HepG2 (cell line): ENCODE measurements at regions of chr4 and their contacts with region 1.

Region 1: DNA sequence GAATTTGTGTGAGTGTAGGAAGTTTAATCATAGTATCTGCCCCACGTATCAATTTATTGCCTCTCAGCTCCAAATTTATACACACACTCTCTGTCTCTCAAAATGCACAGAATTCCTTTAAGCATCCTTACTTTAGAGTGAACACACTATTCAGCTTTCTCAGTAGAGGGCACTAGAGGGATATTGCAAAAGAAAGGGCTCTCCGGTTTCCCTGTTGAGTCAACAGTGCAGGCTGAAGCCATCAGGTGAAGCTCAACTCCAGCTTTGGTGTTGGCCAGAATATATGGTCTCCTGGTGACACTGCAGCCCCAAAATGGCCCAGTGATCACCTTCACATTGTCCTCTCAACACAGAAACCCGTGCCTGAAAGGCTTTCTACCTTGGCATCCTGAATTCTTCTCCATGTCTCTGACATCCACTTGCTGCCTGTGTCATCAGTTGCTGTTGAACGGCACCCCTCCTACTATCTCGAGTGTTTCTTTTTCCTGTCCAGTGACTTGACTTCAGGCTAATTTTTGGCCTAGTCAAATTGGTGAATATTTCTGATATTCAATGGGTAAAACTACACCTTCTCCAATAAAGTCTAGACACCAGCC is 670.5 kb downstream of the GABRG1 start:
- DNase-seq: peak; percentile 18
- ATAC-seq: peak; percentile 96
- H3K4me3 ChIP-seq: no peak overlapping the region
- H3K27ac ChIP-seq: no peak overlapping the region
- H3K4me1 ChIP-seq: no peaks in the 10 kb centered on the region
- H3K27me3 ChIP-seq: no peaks in the 10 kb centered on the region; a peak in 1 of 5 replicates
- CTCF ChIP-seq: peak; percentile 61
- EP300 ChIP-seq: no peak
- POLR2A ChIP-seq: no peak
- RAD21 ChIP-seq: no peak

Region 2: GRCh38 chr4:45741897-45742296 is 288.5 kb after region 1 on chr4:
- CTCF ChIA-PET with region 1: no interaction called
- POLR2A ChIA-PET with region 1: no interaction called
- in situ Hi-C with region 1: no loop called
- intact Hi-C with region 1: loop called (anchors 1 kb)
- DNase-seq: peak; percentile 28
- ATAC-seq: peak; percentile 69
- H3K4me3 ChIP-seq: no peak overlapping the region
- H3K27ac ChIP-seq: no peak overlapping the region
- H3K4me1 ChIP-seq: no peaks in the 10 kb centered on the region
- H3K27me3 ChIP-seq: no peaks in the 10 kb centered on the region
- CTCF ChIP-seq: no peak
- EP300 ChIP-seq: no peak
- POLR2A ChIP-seq: no peak
- RAD21 ChIP-seq: no peak